WTC11 (cell line): ENCODE measurements at regions of chr19 and their contacts with region 1.

Region 1: DNA sequence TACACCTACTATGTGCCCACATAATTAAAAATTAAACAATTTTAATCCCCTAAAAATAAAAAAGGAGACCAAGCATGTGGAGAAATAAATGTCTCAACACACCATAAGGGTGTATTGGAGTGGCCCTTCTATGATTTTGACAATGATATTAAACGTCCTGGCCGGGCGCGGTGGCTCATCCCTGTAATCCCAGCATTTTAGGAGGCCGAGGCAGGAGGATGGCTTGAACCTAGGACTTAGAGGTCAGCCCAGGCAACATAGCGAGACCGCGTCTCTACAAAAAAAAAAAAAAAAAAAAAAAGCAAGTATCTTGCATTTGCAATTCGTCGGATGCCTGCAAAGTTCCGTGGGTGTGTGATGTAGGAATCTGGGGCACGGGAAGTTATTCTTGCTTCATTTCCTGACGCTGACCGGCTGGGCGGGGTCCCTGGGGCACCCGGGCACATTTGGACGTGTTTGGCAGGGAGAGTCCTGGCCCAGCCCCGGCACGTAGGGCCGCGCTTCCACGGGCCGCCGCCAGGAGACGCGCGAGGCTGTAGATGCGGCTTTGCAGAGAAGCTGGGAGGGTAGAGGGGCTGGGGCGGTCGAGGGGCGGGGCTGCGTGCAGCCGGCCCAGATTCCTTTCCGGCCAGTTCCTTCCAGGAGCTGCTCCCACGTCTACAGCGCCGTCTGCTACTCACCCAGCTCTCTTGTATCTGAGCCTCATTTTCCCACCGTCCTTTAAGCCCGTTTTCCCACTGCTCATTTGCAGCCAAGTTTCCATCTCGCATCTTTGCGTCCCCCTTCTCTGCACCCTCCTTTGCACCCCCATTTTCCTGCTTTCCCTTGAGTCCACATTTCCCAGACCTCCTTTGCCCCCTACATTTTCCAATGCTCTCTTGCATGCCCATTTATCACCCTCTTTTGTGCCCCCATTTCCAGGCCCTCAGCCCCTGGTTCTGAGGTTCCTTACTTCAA is 2.2 kb upstream of the TSPAN16 start:
- DNase-seq: peak; percentile 99
- ATAC-seq: peak; percentile 94
- H3K4me3 Mint-ChIP-seq: peak overlapping the region; percentile 61
- H3K27ac Mint-ChIP-seq: peak overlapping the region; percentile 98
- H3K4me1 Mint-ChIP-seq: peaks cover 8% of the 10 kb centered on the region
- H3K27me3 Mint-ChIP-seq: no peaks in the 10 kb centered on the region; the same call in 1 of the 2 replicates
- CTCF ChIP-seq: peak; percentile 90

Region 2: DNA sequence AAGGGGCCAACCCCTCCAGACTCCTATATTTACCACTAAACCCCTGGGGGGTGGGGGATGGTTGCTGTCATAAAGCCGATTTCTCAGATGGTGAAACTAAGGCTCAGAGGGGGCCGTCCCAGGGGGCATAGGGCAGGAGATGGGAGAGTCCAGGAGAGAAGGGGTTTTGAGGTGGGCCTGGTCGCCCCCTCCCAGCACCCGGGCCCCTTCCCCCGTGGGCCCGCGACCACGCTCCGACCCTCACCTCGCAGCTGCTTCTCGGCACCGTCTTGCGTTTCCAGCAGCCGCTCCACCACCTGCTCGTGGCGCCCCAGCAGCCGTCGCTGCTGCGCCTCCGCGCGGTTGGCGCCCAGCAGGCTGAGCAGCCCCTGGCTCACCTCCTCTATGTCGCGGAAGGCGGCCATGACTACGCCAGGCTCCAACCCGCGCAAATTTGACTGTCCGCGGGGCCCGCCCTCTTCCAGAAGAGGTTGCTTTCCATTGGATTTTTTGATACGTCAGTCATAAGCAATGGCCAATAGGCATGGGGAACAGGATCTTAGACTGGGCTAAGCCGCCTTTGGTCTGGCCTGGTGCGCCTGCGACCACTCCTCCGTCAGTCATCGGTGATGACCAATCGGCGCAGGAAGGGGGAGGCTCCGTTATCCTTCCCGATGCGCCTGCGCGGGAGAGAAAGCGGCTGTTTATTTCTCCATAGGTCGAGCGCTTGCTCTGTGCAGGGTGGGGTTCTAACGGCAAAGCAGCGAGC is 138.2 kb before region 1 on chr19 and contains the start of gene SPC24:
- CTCF ChIA-PET with region 1: interaction called, 3 read pairs
- POLR2A ChIA-PET with region 1: interaction called, 10 read pairs
- DNase-seq: peak; percentile 96
- ATAC-seq: peak; percentile 99
- H3K4me3 Mint-ChIP-seq: peak within 1 kb of the TSS; percentile 75
- H3K27ac Mint-ChIP-seq: peak within 1 kb of the TSS; percentile 55
- H3K4me1 Mint-ChIP-seq: peaks cover 7% of the 10 kb centered on the region
- H3K27me3 Mint-ChIP-seq: no peaks in the 10 kb centered on the region
- CTCF ChIP-seq: no peak
- total RNA-seq, gene SPC24: 52.0 to 62.2 TPM (median 58.3 TPM) in 3 replicates

Region 3: DNA sequence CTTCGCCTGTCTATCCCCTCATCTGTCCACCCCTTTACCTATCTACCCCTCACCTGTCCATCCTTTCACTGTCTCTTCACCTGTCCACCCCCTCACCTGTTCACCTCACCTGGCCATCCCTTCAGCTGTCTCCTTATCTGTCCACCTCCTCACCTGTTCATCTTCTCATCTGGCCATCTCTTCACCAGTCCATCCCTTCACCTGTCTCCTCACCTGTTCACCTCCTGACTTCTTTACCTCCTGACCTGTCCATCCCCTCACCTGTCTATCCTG is 83.1 kb before region 1 on chr19:
- CTCF ChIA-PET with region 1: no interaction called
- POLR2A ChIA-PET with region 1: no interaction called
- DNase-seq: no peak
- ATAC-seq: no peak
- H3K4me3 Mint-ChIP-seq: no peak overlapping the region
- H3K27ac Mint-ChIP-seq: no peak overlapping the region
- H3K4me1 Mint-ChIP-seq: no peaks in the 10 kb centered on the region
- H3K27me3 Mint-ChIP-seq: no peaks in the 10 kb centered on the region
- CTCF ChIP-seq: no peak

Region 4: GRCh38 chr19:11274533-11275086 is 19.1 kb before region 1 on chr19:
- CTCF ChIA-PET with region 1: interaction called, 11 read pairs
- POLR2A ChIA-PET with region 1: no interaction called
- DNase-seq: no peak
- ATAC-seq: no peak
- H3K4me3 Mint-ChIP-seq: no peak overlapping the region
- H3K27ac Mint-ChIP-seq: no peak overlapping the region
- H3K4me1 Mint-ChIP-seq: peaks cover 6% of the 10 kb centered on the region
- H3K27me3 Mint-ChIP-seq: peaks cover 12% of the 10 kb centered on the region
- CTCF ChIP-seq: no peak

Region 5: DNA sequence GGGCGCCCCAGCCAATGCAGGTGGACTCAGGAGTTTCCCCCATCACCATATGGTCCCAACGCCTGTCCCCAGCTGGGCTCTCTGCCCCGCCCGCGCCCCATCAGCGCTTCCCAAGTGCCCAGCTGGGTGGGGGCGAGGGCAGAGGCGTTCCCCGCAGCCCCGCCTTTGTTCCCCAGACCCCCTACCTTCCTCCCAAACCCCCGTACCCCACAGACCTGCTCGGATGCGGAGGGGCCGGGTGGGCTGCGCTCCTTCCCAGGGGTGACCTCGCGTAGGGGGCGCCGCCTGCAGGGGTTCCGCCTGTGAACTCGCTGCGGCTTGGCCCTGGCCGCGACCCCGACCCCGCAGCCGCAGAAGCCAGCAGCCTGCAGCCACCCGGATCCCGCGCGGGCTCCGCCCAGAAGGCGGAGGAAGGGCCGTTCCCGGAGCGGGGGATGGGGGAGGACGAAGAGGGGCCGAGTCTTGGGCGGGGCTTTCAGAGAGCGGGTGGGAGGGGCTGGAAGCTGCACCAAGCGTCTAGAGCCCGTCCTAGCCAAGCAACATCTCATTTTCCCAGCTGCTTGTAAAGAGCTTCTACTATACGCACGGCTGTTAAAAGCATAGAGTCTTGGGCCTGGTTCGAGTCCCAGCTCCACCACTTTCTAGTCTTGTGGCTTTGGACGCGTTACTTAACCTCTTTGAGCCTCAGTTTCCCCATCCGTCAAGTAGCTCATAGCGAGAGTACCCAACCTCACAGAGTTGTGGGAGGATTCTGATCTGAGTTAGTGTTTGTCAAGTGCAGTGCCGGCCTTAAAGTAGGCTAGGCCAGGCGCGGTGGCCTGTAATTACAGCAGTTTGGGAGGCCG is 45.8 kb after region 1 on chr19 and contains the start of gene RAB3D:
- CTCF ChIA-PET with region 1: interaction called, 37 read pairs
- POLR2A ChIA-PET with region 1: no interaction called
- DNase-seq: peak; percentile 98
- ATAC-seq: peak; percentile 99
- H3K4me3 Mint-ChIP-seq: peak within 1 kb of the TSS; percentile 81
- H3K27ac Mint-ChIP-seq: peak within 1 kb of the TSS; percentile 41; the same call in 1 of the 2 replicates
- H3K4me1 Mint-ChIP-seq: peaks cover 7% of the 10 kb centered on the region
- H3K27me3 Mint-ChIP-seq: no peaks in the 10 kb centered on the region
- CTCF ChIP-seq: no peak
- total RNA-seq, gene RAB3D: 18.9 to 27.8 TPM (median 27.0 TPM) in 3 replicates

Region 6: DNA sequence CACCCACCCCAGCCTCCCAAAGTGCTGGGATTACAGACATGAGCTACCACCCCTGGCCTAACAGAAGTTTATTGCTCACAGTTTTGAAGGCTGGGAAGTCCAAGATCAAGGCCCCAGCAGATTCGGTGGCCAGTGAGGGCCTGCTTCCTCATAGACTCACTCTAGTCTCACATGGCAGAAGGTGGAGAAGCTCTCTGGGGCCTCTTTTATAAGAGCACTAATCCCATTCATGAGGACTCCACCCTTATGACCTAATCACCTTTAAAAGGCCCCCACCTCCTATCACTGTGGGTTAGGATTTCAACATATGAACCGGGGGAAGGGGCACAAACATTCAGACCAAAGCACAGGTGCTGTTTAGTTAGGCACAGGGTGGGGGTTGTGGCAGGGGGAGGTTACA is 73.8 kb after region 1 on chr19:
- CTCF ChIA-PET with region 1: interaction called, 31 read pairs
- POLR2A ChIA-PET with region 1: no interaction called
- DNase-seq: no peak
- ATAC-seq: no peak
- H3K4me3 Mint-ChIP-seq: no peak overlapping the region
- H3K27ac Mint-ChIP-seq: no peak overlapping the region
- H3K4me1 Mint-ChIP-seq: peaks cover 1% of the 10 kb centered on the region; the same call in 1 of the 2 replicates
- H3K27me3 Mint-ChIP-seq: no peaks in the 10 kb centered on the region
- CTCF ChIP-seq: no peak

Region 7: DNA sequence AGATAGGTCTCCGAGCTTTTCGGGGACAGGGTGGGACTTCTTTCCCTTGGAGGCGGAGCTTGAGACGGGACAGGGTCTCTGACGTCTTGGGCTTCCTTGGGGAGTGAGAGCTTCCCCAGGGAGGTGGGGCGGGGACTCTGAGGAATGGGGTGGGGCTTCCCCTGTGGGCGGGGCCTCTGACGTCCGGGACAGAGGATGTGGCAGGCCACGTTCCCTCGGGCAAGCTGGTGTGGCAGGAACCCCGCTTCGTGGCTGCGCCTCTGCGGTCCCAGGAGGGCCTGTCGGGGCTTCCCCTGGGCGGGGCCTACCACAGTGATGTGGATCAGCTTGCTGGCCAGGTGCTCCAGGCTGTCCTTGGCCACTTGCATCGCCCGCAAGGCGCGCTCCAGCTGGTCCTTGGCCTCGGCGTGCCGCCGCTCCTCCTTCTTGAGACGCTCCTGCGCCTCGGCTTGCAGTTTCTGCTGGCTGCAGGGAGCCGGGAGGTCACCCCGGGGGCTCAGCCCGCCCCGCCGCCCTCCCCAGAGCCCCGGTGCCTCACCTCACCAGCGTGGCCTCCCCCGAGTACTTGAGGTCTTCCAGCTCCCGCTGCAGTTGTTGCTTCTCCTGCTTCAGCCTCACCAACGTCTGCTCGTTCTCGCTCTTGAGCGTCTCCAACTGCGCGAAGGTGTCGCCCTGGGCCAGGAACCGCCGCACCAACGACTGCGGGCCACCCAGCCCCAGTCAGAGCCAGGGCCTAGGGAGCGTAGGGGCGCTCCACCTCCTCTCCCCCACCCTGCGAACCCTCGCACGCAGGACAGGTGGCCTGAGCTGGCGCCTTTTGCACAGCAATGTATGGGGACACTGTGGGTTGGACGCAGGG is 128.7 kb after region 1 on chr19:
- CTCF ChIA-PET with region 1: interaction called, 33 read pairs
- POLR2A ChIA-PET with region 1: interaction called, 3 read pairs
- DNase-seq: peak; percentile 99
- ATAC-seq: peak; percentile 70
- H3K4me3 Mint-ChIP-seq: peak overlapping the region; percentile 87
- H3K27ac Mint-ChIP-seq: peak overlapping the region; percentile 97
- H3K4me1 Mint-ChIP-seq: peaks cover 15% of the 10 kb centered on the region
- H3K27me3 Mint-ChIP-seq: peaks cover 29% of the 10 kb centered on the region
- CTCF ChIP-seq: no peak

Region 8: DNA sequence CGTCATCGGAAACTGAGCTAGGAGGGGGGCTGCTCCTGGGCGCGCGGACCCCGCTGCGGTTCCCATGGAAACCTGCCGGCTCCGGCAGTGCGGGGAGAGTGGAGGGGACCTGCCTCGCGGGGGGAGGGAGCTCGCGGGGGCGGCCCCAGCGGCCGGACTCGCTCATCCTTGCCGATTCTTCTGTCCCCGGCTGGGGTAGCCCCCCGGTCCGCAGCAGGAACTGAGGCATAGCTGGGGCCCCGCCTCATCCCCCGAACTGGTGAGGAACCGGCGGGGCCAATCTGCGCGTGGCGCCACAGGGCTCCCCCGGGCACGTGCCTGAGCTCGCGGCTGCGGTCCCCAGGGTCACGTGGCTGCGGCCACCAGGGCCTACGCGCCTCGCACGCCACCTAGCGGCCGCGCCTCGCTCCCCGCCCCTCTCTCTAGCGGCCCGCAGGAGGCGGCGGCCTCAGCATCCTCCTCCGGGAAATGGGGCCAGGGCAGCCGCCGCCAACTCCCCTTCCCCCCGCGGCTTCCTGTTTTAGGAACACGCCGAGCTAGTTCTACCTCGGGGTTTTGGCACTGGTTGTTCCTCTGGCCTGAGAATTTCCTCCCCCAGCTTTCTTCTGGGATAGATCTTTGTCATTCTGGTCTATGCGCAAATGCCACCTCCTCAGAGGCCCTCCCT is 188.8 kb after region 1 on chr19:
- CTCF ChIA-PET with region 1: interaction called, 22 read pairs
- POLR2A ChIA-PET with region 1: no interaction called
- DNase-seq: peak; percentile 89
- ATAC-seq: peak; percentile 8; the same call in 1 of the 2 replicates
- H3K4me3 Mint-ChIP-seq: peak overlapping the region; percentile 62
- H3K27ac Mint-ChIP-seq: no peak overlapping the region
- H3K4me1 Mint-ChIP-seq: peaks cover 13% of the 10 kb centered on the region
- H3K27me3 Mint-ChIP-seq: peaks cover 48% of the 10 kb centered on the region
- CTCF ChIP-seq: peak; percentile 97